ENCODE measurements at regions of chr11 and their contacts with region 1.

Region 1: GRCh38 chr11:83427501-83427900 is 141.3 kb upstream of the CCDC90B start:
- DNase-seq: no peak
- H3K4me3 ChIP-seq: no peak overlapping the region
- H3K27ac ChIP-seq: no peak overlapping the region
- H3K4me1 ChIP-seq: no peaks in the 10 kb centered on the region
- H3K27me3 ChIP-seq: no peaks in the 10 kb centered on the region
- CTCF ChIP-seq: no peak

Region 2: GRCh38 chr11:83459802-83460201 is 32.3 kb after region 1 on chr11:
- CTCF ChIA-PET with region 1: no interaction called
- dilution Hi-C with region 1: loop called (anchors 5 kb)
- in situ Hi-C with region 1: no loop called
- intact Hi-C with region 1: no loop called
- DNase-seq: no peak
- H3K4me3 ChIP-seq: no peak overlapping the region
- H3K27ac ChIP-seq: no peak overlapping the region
- H3K4me1 ChIP-seq: no peaks in the 10 kb centered on the region
- H3K27me3 ChIP-seq: no peaks in the 10 kb centered on the region
- CTCF ChIP-seq: no peak

Region 3: DNA sequence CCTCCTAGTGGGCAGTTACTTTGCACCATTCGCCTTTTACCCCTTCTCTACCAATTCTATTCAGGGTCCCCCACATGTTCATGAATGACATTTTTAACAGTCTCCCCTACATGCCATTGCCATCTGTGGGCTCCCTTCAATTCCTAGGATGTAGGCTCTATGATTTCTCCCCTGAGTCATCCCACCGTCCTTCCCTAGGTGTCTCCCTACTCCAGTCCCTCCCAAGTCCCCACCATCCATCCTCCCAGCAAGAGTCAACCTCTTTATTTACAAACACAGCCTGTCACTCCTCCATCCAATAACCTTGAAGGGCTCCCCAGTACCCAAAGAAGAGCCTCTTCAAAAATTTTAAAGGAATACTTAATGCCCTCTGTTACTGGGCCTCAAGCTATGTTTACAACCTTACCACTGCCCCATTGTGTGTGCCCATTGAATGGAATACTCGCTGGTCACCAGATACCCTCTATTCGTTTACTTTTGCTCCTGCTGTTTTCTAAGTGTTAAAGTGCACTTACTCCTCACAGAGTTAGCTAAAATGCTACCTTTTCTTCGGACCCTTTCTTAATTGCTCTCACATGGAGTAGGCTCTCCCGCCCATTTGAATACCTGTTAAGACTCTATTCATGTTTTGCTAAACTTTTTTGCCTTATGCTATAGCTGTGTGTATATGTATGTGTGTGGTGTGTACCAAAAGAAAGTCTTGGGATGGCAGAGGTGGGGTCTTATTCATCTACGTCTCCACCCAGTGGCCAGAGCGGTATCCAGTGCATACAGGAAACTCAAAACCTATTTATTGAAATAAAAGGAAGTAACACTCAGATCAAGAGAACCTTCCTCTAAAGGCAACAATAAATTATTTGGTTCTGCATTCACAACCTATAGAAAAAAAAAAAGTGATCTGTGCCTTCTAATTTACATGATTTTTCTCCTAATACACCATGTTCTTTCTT is 94.4 kb after region 1 on chr11:
- CTCF ChIA-PET with region 1: no interaction called
- dilution Hi-C with region 1: no loop called
- in situ Hi-C with region 1: no loop called
- intact Hi-C with region 1: no loop called
- DNase-seq: no peak
- H3K4me3 ChIP-seq: no peak overlapping the region
- H3K27ac ChIP-seq: no peak overlapping the region
- H3K4me1 ChIP-seq: no peaks in the 10 kb centered on the region
- H3K27me3 ChIP-seq: peaks cover 2% of the 10 kb centered on the region
- CTCF ChIP-seq: peak in 1 of 2 donors; percentile 54